ENCODE measurements at regions of chr1 and their contacts with region 1.

Region 1: GRCh38 chr1:154183045-154183915 is 8.6 kb downstream of the TPM3 start:
- DNase-seq: peak; percentile 98
- H3K4me3 ChIP-seq: peak overlapping the region; percentile 87 to 97 (median 96)
- H3K27ac ChIP-seq: peak overlapping the region; percentile 80
- H3K4me1 ChIP-seq: peaks cover 15 to 34% (median 24%) of the 10 kb centered on the region in 4 experiments; a peak in 6 of 7 replicates
- H3K27me3 ChIP-seq: no peaks in the 10 kb centered on the region
- CTCF ChIP-seq: peak in 1 of 3 experiments; percentile 7; a peak in 1 of 4 replicates
- EP300 ChIP-seq: peak; percentile 47 to 71
- POLR2A ChIP-seq: peak; percentile 1 to 68
- RAD21 ChIP-seq: peak in 1 of 2 experiments; percentile 10; a peak in 1 of 4 replicates

Region 2: GRCh38 chr1:154166207-154166606 is 17.1 kb before region 1 on chr1:
- CTCF ChIA-PET with region 1: no interaction called
- POLR2A ChIA-PET with region 1: interaction called, 11 read pairs
- DNase-seq: no peak
- H3K4me3 ChIP-seq: no peak overlapping the region
- H3K27ac ChIP-seq: no peak overlapping the region
- H3K4me1 ChIP-seq: no peaks in the 10 kb centered on the region
- H3K27me3 ChIP-seq: no peaks in the 10 kb centered on the region
- CTCF ChIP-seq: no peak
- EP300 ChIP-seq: no peak
- POLR2A ChIP-seq: no peak
- RAD21 ChIP-seq: no peak

Region 3: GRCh38 chr1:154193821-154194220 is 10.5 kb after region 1 on chr1:
- CTCF ChIA-PET with region 1: interaction called, 19 read pairs
- POLR2A ChIA-PET with region 1: interaction called, 14 read pairs
- DNase-seq: no peak
- H3K4me3 ChIP-seq: no peak overlapping the region
- H3K27ac ChIP-seq: no peak overlapping the region
- H3K4me1 ChIP-seq: no peaks in the 10 kb centered on the region
- H3K27me3 ChIP-seq: no peaks in the 10 kb centered on the region
- CTCF ChIP-seq: no peak
- EP300 ChIP-seq: no peak
- POLR2A ChIP-seq: no peak
- RAD21 ChIP-seq: no peak

Region 4: GRCh38 chr1:154213274-154213673 is 30.0 kb after region 1 on chr1:
- CTCF ChIA-PET with region 1: no interaction called
- POLR2A ChIA-PET with region 1: interaction called, 107 read pairs
- DNase-seq: no peak
- H3K4me3 ChIP-seq: no peak overlapping the region
- H3K27ac ChIP-seq: no peak overlapping the region
- H3K4me1 ChIP-seq: no peaks in the 10 kb centered on the region
- H3K27me3 ChIP-seq: no peaks in the 10 kb centered on the region
- CTCF ChIP-seq: no peak
- EP300 ChIP-seq: no peak
- POLR2A ChIP-seq: no peak
- RAD21 ChIP-seq: no peak

Region 5: DNA sequence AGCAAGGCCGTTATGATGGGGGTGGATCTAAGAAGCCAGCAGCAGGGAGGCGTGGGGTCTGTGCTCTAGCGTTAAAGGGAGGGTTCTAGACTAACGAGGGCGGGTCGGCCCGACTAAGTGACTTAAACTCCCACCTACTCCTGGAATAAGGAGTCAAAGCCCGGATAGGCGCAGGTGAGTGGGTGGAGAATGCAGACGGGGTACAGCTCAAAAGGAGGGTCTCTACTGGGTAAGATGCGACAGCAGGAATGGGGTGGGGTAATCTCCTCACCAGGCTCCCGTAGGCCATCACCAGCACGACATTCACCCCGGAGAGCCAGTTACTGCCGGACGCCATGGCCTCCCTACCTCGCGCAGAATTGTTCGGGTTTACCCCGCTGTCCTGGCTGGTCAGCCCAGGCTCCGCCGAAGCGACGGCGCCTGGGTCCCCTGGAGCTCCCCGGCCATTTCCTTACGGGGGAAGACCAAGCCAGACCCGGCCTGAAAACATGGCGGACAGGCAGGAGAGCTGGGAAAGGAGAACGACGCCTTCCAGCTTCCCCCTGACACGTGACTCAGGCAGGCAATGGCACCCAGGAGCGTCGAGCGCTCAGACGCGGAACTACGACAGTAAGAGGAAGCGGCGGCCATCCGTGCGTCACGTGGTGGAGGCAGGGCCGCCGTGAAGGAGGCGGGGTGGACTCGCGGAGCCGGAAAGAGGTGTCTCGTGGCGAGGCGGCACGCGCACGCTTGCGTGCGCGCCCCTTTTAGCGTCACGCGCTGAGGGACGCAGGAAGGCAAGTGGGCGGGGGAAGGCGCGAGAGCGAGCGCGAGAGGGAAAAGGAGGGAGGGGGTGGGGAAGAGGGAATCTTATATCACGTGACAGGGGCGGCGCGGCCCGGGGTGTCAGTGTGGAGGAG is 37.0 kb after region 1 on chr1 and contains the start of gene UBAP2L:
- CTCF ChIA-PET with region 1: interaction called, 3 read pairs
- POLR2A ChIA-PET with region 1: interaction called, 107 read pairs
- DNase-seq: peak; percentile 96 to 99
- H3K4me3 ChIP-seq: peak within 1 kb of the TSS; percentile 83 to 96 (median 90)
- H3K27ac ChIP-seq: peak within 1 kb of the TSS; percentile 99
- H3K4me1 ChIP-seq: peaks cover 2 to 11% (median 3%) of the 10 kb centered on the region in 4 experiments; a peak in 5 of 7 replicates
- H3K27me3 ChIP-seq: no peaks in the 10 kb centered on the region
- CTCF ChIP-seq: no peak
- EP300 ChIP-seq: no peak
- POLR2A ChIP-seq: peak; percentile 90 to 97
- RAD21 ChIP-seq: no peak
- total RNA-seq, gene UBAP2L: 253 and 254 TPM in 2 replicates